PC-3 (cell line): ENCODE measurements at regions of chr3 and their contacts with region 1.

Region 1: GRCh38 chr3:109275702-109276293 is 40.5 kb downstream of the DPPA2 start:
- DNase-seq: peak; percentile 63
- ATAC-seq: peak; percentile 71
- H3K4me3 ChIP-seq: no peak overlapping the region
- H3K27ac ChIP-seq: no peak overlapping the region
- H3K4me1 ChIP-seq: no peaks in the 10 kb centered on the region
- H3K27me3 ChIP-seq: peaks cover 7% of the 10 kb centered on the region; the same call in 1 of the 2 replicates
- CTCF ChIP-seq: peak; percentile 80

Region 2: GRCh38 chr3:108669208-108669607 is 606.6 kb before region 1 on chr3:
- CTCF ChIA-PET with region 1: no interaction called
- POLR2A ChIA-PET with region 1: no interaction called
- intact Hi-C with region 1: no loop called
- DNase-seq: no peak
- ATAC-seq: no peak
- H3K4me3 ChIP-seq: no peak overlapping the region
- H3K27ac ChIP-seq: no peak overlapping the region
- H3K4me1 ChIP-seq: no peaks in the 10 kb centered on the region
- H3K27me3 ChIP-seq: no peaks in the 10 kb centered on the region
- CTCF ChIP-seq: no peak

Region 3: DNA sequence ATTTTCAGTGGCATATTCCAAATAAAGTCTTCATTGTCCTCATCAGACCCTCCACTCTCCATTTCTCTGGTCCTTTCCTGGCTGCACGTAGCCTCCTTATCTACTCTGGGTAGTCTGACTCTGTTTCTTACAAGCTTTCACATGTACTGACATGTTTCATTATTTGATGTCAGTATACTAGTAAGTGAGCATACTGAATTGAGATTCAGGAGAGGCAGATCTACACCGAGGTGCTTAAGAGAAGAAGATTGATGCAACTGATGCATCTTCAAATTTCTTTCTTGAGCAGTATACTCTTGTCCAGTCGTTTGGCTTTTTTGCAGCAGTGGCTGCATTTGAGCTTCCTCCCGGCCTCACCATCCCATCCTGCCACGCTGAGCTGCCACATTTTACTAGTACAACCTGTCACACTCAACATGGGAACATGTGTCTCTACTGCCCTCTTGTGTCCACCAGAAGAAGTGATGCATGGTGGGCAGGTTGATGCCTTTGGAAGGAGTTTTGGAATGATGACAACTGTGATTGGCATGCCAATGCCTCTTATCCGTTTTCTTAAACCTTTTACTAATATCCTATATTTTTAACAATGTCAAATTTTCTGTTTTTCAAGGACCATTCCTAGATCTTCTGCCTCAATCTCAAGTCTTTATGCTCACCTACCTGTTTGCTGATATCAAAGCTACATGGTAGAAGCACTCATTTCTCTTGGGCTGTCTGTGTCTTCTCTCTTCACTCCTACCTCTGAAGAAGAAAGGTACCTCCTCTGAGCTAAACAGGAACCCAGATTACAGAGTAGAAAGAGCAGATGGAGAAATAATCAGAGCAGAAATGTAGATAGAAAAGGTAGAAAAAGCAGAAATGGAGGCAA is 360.8 kb before region 1 on chr3:
- CTCF ChIA-PET with region 1: no interaction called
- POLR2A ChIA-PET with region 1: no interaction called
- intact Hi-C with region 1: no loop called
- DNase-seq: peak; percentile 85
- ATAC-seq: peak; percentile 97
- H3K4me3 ChIP-seq: no peak overlapping the region
- H3K27ac ChIP-seq: no peak overlapping the region
- H3K4me1 ChIP-seq: no peaks in the 10 kb centered on the region
- H3K27me3 ChIP-seq: peaks cover 21% of the 10 kb centered on the region
- CTCF ChIP-seq: peak; percentile 92

Region 4: DNA sequence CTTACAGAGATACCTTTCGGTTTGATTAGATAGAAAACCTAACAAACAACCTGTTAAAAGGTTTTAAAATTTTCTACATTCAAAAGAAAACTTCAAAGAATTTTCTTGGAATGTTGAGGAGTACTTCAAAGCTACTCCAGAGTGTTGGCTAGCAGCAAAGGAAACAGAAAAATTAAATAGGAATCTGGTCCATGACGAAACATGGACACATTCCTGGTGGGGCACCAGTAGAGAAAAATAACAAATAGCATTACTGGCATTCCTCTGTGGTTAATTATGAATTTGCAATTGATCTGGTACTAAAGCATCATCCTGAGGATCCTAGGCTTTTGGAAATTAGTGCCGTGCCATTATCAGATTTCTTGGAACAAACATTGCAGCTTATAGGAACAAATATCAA is 121.0 kb after region 1 on chr3:
- CTCF ChIA-PET with region 1: no interaction called
- POLR2A ChIA-PET with region 1: no interaction called
- intact Hi-C with region 1: loop called (anchors 1 kb)
- DNase-seq: no peak
- ATAC-seq: no peak
- H3K4me3 ChIP-seq: no peak overlapping the region
- H3K27ac ChIP-seq: no peak overlapping the region
- H3K4me1 ChIP-seq: no peaks in the 10 kb centered on the region
- H3K27me3 ChIP-seq: no peaks in the 10 kb centered on the region; the same call in 1 of the 2 replicates
- CTCF ChIP-seq: no peak

Region 5: DNA sequence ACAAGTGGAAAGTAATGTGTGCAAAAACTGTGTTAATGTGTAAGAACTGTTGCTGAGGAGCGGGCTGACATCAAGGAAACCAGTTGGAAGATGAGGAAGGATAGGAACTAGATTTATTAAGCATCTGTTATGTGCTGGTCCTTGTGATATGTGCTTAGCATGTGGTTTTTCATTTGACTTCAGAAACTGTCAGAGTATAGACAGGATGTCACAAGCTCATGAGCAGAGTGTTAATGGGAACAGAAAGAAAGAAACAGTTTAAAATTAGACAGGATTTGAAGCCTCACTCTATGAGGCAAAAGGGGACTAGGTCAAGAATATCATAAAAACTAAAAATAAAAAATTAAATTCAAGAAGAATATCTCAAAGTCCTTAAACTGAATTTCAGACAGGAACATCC is 332.1 kb after region 1 on chr3:
- CTCF ChIA-PET with region 1: no interaction called
- POLR2A ChIA-PET with region 1: no interaction called
- intact Hi-C with region 1: no loop called
- DNase-seq: no peak
- ATAC-seq: no peak
- H3K4me3 ChIP-seq: no peak overlapping the region
- H3K27ac ChIP-seq: no peak overlapping the region
- H3K4me1 ChIP-seq: no peaks in the 10 kb centered on the region
- H3K27me3 ChIP-seq: peaks cover 38% of the 10 kb centered on the region
- CTCF ChIP-seq: no peak